ENCODE measurements at regions of chr16 and their contacts with region 1.

Region 1: DNA sequence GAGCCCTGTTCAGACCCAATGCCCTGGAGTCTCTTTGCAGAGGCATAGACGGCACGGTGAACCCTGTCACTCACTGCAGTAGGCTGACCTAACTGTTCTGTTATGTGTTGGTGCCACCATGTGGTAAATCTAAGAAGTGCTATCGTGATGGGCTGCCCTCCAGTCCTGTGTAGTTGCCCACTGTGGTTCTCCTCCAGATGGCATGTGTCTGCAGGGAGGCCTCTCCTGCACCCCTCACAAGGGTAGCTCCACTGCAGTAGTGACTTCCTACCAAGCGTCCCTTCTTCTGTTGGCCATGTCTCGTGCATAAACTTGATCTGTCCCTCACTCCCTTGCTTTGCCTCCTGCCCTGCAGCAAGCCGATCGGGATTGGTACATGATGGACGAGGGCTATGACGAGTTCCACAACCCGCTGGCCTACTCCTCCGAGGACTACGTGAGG is 5.8 kb downstream of the DHX38 start:
- H3K4me3 Mint-ChIP-seq: no peak overlapping the region
- H3K27ac Mint-ChIP-seq: no peak overlapping the region
- H3K4me1 Mint-ChIP-seq: peaks cover 19% of the 10 kb centered on the region
- H3K27me3 Mint-ChIP-seq: no peaks in the 10 kb centered on the region

Region 2: DNA sequence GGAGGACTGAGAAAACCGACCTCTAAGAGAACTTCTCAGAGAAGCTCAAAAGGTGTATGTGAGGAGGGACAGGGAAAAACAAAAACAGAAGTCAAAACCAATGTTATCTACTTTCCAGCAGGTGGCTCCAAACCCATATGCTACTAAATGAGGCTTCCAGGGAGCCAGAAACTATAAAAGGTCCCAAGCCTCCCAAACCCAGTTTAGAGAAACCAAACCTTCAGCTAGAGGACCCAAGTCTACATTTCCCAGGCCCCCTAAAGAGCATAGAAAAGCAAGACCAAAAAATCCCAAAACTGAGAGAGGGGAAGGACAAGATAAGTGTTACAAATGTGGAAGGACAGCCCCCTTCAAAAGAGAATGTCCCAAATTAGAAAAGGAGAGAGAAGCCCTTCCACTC is 32.7 kb before region 1 on chr16:
- intact Hi-C with region 1: loop called (anchors 2 kb)
- H3K4me3 Mint-ChIP-seq: no peak overlapping the region
- H3K27ac Mint-ChIP-seq: no peak overlapping the region
- H3K4me1 Mint-ChIP-seq: peaks cover 16% of the 10 kb centered on the region
- H3K27me3 Mint-ChIP-seq: no peaks in the 10 kb centered on the region

Region 3: DNA sequence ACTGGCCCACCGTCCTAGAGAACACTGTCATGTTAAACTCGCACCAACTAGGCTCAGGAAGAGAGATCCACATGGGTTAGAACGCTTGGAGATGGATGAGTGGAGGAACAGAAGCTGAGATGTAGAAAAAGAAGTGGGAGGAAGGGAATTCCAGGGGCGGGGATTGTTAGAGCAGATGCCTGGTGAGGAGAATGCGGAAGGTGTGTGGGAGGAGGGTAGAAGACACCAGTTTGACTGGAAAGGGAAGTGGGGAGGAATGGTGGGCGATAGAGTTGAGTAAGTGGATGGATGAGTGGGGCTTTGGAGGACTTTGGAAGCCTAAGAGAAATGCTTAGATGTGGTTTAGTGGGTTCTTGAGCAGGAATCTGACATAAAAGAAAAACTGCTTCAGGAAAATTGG is 31.6 kb after region 1 on chr16:
- intact Hi-C with region 1: no loop called
- H3K4me3 Mint-ChIP-seq: peak overlapping the region; percentile 38
- H3K27ac Mint-ChIP-seq: peak overlapping the region; percentile 84
- H3K4me1 Mint-ChIP-seq: peaks cover 64% of the 10 kb centered on the region
- H3K27me3 Mint-ChIP-seq: no peaks in the 10 kb centered on the region